ENCODE measurements at regions of chr18 and their contacts with region 1.

Region 1: DNA sequence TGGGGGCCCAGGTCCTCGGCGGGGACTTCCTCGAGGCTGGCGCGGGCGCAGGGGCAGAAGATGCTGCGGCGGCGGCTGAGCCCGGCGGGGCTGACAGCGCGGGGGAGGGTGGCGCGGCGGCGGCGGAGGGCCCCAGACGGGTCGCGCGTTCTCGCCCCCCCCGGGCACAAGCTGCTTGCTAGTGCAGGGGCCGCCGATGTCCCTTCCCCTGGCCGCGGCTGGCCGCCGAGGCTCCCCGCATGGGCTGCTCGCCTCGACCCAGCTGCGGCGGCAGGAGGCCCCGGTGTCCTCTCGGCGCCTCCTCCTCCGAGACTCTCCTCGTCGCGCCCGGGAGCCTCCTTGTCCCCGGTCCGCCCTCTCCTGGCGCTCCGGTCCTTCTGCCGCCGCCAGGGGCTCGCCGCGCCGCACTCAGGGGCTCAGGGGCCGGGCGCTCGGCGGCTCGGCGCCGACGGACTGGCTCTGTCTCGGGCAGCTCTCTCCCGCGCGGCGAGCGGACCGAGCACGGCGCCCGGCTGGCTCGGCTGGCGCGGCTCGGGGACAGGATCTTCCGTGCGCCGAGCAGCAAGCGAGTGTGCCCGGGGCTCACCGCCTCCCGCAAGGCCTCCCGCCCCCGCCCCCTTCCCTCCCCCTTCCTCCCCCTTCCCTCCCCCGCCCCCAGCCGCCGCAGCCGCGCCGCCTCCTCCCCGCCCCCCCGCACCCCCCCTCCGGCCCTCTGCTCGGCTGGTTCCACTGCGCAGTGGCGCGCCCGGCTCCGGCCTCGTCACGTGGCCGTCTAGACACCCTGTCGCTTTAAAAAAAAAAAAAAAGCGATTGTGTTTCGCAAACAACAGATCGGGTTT is 902 bp upstream of the SMAD7 start:
- DNase-seq: peak; percentile 70
- H3K4me3 Mint-ChIP-seq: peak overlapping the region; percentile 85
- H3K27ac Mint-ChIP-seq: peak overlapping the region; percentile 70
- H3K4me1 Mint-ChIP-seq: peaks cover 32% of the 10 kb centered on the region
- H3K27me3 Mint-ChIP-seq: no peaks in the 10 kb centered on the region

Region 2: GRCh38 chr18:48777026-48777743 is 174.5 kb before region 1 on chr18:
- CTCF ChIA-PET with region 1: interaction called, 4 read pairs
- intact Hi-C with region 1: loop called (anchors 1 kb)
- DNase-seq: peak; percentile 71
- H3K4me3 Mint-ChIP-seq: no peak overlapping the region
- H3K27ac Mint-ChIP-seq: no peak overlapping the region
- H3K4me1 Mint-ChIP-seq: peaks cover 3% of the 10 kb centered on the region
- H3K27me3 Mint-ChIP-seq: no peaks in the 10 kb centered on the region

Region 3: DNA sequence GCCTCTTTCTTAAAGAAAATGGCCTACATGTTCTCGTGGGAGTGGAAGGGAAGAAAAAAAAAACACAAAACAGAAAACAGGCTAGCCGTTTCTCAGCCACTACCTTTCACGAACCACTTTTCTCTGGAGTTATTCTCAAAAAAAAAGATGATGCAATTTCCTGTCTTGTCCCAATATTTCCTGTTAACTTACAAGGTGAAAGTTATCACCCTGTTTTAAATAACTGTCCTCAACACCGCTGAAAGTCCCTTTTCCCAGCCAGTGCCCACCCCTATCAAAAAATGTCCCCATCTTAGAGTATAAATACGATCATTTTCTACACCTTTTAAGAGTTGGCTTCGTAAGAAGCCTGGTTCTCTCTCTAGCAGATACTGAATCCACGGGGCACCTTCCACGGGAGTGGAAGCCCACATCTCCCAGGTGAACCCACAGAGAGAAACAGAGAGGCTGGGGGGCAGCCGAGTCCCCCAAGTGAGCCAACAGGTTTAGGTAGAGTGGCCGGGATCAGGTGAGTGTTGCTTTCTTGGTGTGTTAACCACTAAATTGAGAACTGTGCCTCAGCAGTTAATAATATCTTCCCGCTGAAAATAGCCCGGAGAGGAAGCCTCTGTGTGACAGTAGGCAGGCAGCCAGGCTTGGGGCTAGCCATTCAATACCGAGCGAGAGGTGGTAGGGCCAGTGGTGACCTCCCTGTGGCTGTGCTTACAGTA is 16.8 kb before region 1 on chr18:
- CTCF ChIA-PET with region 1: interaction called, 4 read pairs
- intact Hi-C with region 1: loop called (anchors 1 kb)
- DNase-seq: peak; percentile 29
- H3K4me3 Mint-ChIP-seq: peak overlapping the region; percentile 49
- H3K27ac Mint-ChIP-seq: peak overlapping the region; percentile 95
- H3K4me1 Mint-ChIP-seq: peaks cover 82% of the 10 kb centered on the region
- H3K27me3 Mint-ChIP-seq: no peaks in the 10 kb centered on the region

Region 4: DNA sequence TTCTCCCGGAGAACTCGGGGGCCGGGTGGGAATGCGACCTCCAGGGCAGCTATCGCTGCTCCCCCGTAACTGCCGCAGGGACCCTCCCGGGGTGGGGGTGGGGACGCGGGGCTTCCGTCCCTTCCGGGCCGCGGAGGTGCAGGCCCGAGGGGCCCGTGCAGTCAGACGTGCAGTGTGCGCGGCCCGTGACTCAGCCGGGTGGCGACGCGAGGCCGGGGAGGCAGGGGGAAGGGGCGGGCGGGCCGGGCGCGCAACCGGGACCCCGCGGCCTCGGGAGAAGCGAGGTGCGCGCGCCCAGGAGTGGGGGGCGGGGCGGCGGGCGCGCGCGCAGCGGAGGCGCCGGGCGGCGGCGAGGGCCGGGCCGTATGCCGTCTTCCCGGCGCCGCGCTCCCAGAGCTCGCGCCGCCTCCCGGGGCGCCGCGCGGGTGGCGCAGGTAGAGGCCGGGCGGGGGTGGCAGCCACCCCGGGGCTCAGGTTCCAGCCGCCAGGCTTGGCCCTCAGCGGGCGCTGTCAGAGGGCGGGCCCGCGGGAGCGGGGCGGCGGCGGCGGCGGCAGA is 24.1 kb after region 1 on chr18:
- CTCF ChIA-PET with region 1: interaction called, 5 read pairs
- intact Hi-C with region 1: loop called (anchors 2 kb)
- DNase-seq: peak; percentile 63
- H3K4me3 Mint-ChIP-seq: peak overlapping the region; percentile 24
- H3K27ac Mint-ChIP-seq: no peak overlapping the region
- H3K4me1 Mint-ChIP-seq: peaks cover 5% of the 10 kb centered on the region
- H3K27me3 Mint-ChIP-seq: peaks cover 21% of the 10 kb centered on the region

Region 5: GRCh38 chr18:49006641-49007454 is 55.2 kb after region 1 on chr18:
- CTCF ChIA-PET with region 1: no interaction called
- intact Hi-C with region 1: no loop called
- DNase-seq: no peak
- H3K4me3 Mint-ChIP-seq: no peak overlapping the region
- H3K27ac Mint-ChIP-seq: no peak overlapping the region
- H3K4me1 Mint-ChIP-seq: no peaks in the 10 kb centered on the region
- H3K27me3 Mint-ChIP-seq: no peaks in the 10 kb centered on the region

Region 6: DNA sequence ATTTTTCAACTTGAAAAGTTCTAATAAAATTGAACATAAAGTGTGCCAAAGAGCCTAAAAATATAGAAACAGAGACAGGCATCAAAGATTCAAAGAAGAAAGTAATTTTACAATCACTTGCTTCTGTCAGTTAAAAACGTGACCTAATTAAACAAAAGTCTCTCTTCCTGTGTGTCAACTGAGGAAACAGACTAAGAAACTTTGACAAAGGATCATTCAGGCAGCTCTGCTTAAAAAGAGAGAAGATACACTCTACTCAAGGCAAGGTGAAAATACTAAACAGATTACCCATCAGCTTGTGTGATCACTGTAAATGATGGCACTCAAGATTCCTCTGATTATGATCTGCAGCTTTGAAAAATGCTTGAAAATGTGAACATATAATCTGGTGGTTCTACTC is 461.0 kb after region 1 on chr18:
- CTCF ChIA-PET with region 1: no interaction called
- intact Hi-C with region 1: loop called (anchors 10 kb)
- DNase-seq: no peak
- H3K4me3 Mint-ChIP-seq: no peak overlapping the region
- H3K27ac Mint-ChIP-seq: peak overlapping the region; percentile 79
- H3K4me1 Mint-ChIP-seq: peaks cover 35% of the 10 kb centered on the region
- H3K27me3 Mint-ChIP-seq: no peaks in the 10 kb centered on the region

Region 7: DNA sequence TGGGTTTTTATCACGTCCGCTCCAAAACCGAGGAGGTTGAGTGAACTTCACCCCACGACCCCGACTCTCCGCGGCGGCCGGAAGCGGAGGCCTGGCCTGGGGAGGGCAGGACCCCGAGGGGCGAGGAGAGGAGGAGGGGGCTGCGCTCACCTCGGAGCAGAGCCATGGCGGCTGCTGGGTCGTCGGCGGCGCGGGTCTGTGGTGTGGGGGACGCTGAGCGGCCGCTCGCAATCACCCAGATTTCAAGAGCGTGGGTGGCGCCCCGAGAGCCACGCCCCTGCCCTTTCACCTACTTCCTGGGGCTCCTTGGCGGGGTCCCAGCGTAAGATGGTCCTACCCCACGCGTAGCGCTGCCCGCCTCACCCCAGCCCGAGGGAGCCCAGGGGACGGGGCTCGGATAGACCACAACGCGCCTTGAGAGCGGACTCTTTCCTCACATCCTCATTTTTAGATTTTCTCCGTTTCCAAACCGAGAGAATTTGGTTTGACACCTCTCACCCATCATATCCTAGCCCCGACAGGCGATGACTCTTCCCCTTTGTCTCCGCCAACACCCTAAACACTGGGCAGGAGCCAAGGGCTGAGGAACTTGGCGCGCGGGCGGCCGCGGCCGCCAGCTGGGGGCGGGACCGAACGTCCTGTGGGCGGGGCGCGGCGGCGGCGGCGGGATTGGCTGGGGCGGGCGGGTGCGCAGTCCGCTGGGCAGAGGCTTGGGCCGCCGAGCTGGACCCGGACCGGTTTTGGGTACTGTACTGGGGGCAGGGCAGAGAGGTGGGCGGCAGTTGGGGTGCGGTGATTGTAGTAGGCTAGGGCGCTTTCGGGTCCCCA is 861.9 kb after region 1 on chr18 and contains the start of gene ACAA2:
- CTCF ChIA-PET with region 1: no interaction called
- intact Hi-C with region 1: loop called (anchors 10 kb)
- DNase-seq: peak; percentile 80
- H3K4me3 Mint-ChIP-seq: peak within 1 kb of the TSS; percentile 90
- H3K27ac Mint-ChIP-seq: peak within 1 kb of the TSS; percentile 96
- H3K4me1 Mint-ChIP-seq: peaks cover 36% of the 10 kb centered on the region
- H3K27me3 Mint-ChIP-seq: no peaks in the 10 kb centered on the region
- total RNA-seq, gene ACAA2: 67.9 to 69.8 TPM